Transverse colon (tissue), 4 donors: ENCODE measurements at regions of chr14 and their contacts with region 1.

Region 1: DNA sequence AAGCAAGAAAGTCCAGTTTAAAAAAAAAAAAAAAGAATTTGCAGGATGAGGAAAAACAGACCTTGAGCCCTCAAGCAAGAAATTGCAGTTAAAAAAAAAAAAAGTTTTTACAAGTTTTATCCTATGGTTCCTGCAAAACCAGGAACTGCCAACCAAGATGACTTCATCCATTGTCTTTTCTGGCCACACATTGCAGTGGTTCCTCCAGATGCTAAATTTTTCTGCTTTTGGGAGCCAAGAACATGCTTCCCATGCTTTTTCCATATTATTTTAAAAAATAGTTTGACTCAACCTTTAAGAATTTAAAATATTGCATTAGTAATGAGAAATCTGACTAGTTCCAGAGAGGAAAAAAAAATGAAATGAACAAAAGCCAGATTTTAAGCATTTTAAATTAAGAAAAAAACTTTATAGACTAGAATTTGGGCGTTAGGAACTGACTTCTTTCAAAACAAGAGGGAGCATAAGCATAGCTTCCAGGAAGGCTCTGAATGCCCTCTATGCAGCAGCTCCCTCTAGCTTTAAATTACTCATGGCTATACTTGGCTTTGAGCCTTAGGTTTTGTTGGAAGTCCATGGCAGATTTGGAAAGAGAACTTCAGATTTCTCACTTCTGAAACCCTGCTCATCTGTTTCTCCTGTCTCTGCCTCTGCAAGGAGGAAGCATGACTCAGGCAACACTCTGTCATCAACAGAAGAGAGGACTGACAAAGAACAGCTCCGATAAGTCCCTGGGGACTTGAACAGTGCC is 124.5 kb downstream of the GPR65 start:
- DNase-seq: no peak
- H3K4me3 ChIP-seq: no peak overlapping the region
- H3K27ac ChIP-seq: peak overlapping the region in 3 of 4 donors; percentile 30 to 54 (median 50)
- H3K4me1 ChIP-seq: peaks cover 0 to 5% (median 0%) of the 10 kb centered on the region in 4 donors
- H3K27me3 ChIP-seq: no peaks in the 10 kb centered on the region
- CTCF ChIP-seq: no peak
- EP300 ChIP-seq: no peak
- POLR2A ChIP-seq: no peak

Region 2: GRCh38 chr14:87049950-87050349 is 1079.5 kb before region 1 on chr14:
- in situ Hi-C with region 1: no loop called
- intact Hi-C with region 1: loop called (anchors 10 kb)
- DNase-seq: no peak
- H3K4me3 ChIP-seq: no peak overlapping the region
- H3K27ac ChIP-seq: no peak overlapping the region
- H3K4me1 ChIP-seq: no peaks in the 10 kb centered on the region
- H3K27me3 ChIP-seq: no peaks in the 10 kb centered on the region
- CTCF ChIP-seq: peak in 1 of 5 experiments; percentile 9
- EP300 ChIP-seq: no peak
- POLR2A ChIP-seq: no peak

Region 3: GRCh38 chr14:87767567-87767901 is 361.9 kb before region 1 on chr14:
- in situ Hi-C with region 1: no loop called
- intact Hi-C with region 1: no loop called
- DNase-seq: no peak
- H3K4me3 ChIP-seq: no peak overlapping the region
- H3K27ac ChIP-seq: no peak overlapping the region
- H3K4me1 ChIP-seq: no peaks in the 10 kb centered on the region
- H3K27me3 ChIP-seq: no peaks in the 10 kb centered on the region
- CTCF ChIP-seq: no peak
- EP300 ChIP-seq: no peak
- POLR2A ChIP-seq: no peak

Region 4: DNA sequence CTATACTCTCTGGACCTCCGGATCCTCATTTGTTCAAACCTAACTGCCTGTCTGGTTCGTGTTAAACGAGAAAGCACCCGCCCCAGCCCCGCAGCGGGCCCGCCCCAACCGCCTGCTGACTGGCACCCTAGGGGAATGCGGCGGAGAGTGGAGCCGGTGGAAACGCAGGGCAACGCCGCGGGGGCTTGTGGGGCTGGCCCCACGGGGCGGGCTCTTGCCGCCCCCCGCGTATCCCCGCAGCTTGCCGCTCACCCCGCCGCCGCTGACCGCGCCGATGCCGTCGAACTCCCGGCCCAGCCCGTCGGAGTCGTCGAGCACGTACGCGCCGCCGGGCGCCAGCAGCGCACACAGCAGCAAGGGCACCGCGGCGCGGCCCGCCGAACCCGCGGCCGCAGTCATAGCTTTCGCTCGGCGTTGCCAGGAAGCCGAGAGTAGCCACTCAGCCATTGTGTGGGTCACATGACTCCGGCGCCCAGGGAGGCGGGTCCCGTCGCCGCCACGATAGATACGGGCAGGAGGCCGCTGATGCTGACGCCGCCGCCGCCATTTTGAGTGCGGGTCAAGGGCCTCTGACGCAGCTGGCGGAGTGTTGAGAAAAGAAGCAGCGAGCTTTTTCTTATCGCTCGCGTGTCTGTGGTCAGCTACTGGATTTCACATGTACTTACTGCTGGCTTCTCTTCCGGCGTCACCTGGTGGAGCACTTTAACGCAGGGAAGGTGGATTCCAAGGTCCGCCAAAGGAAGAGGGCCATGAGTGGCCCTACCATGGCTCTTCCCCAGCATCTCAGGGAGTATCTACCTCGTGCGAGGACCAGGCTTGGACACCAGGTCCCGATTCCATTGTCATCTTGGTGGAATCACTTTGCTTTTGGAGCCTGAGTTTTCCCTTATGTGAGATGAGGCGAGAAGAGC is 136.5 kb before region 1 on chr14 and contains the start of gene GALC:
- in situ Hi-C with region 1: no loop called
- intact Hi-C with region 1: no loop called
- DNase-seq: peak; percentile 96
- H3K4me3 ChIP-seq: peak within 1 kb of the TSS; percentile 61 to 85 (median 73)
- H3K27ac ChIP-seq: peak within 1 kb of the TSS; percentile 89 to 95 (median 93)
- H3K4me1 ChIP-seq: peaks cover 0 to 49% (median 8%) of the 10 kb centered on the region in 4 donors
- H3K27me3 ChIP-seq: no peaks in the 10 kb centered on the region
- CTCF ChIP-seq: no peak
- EP300 ChIP-seq: no peak
- POLR2A ChIP-seq: peak; percentile 45
- total RNA-seq, gene GALC: 8.0 to 42.3 (median 28.9) TPM